IMR-90 (cell line): ENCODE measurements at regions of chr1 and their contacts with region 1.

Region 1: GRCh38 chr1:111755331-111756123 is at the start of gene DDX20:
- DNase-seq: peak; percentile 98
- ATAC-seq: peak; percentile 96
- H3K4me3 ChIP-seq: peak within 1 kb of the TSS; percentile 85
- H3K27ac ChIP-seq: peak within 1 kb of the TSS; percentile 94
- H3K4me1 ChIP-seq: peaks cover 4% of the 10 kb centered on the region
- H3K27me3 ChIP-seq: no peaks in the 10 kb centered on the region
- CTCF ChIP-seq: peak; percentile 97
- POLR2A ChIP-seq: peak; percentile 87; the same call in 1 of the 2 replicates
- RAD21 ChIP-seq: peak; percentile 86
- total RNA-seq, gene DDX20: 10.9 and 14.2 TPM in 2 replicates

Region 2: GRCh38 chr1:111227851-111228747 is 527.4 kb before region 1 on chr1:
- CTCF ChIA-PET with region 1: no interaction called
- POLR2A ChIA-PET with region 1: no interaction called
- dilution Hi-C with region 1: no loop called
- in situ Hi-C with region 1: loop called (anchors 10 kb)
- intact Hi-C with region 1: loop called (anchors 5 kb)
- DNase-seq: peak; percentile 93
- ATAC-seq: peak; percentile 97
- H3K4me3 ChIP-seq: no peak overlapping the region
- H3K27ac ChIP-seq: peak overlapping the region; percentile 66; the same call in 1 of the 2 replicates
- H3K4me1 ChIP-seq: peaks cover 12% of the 10 kb centered on the region
- H3K27me3 ChIP-seq: no peaks in the 10 kb centered on the region
- CTCF ChIP-seq: no peak
- POLR2A ChIP-seq: no peak
- RAD21 ChIP-seq: no peak

Region 3: GRCh38 chr1:111471012-111471411 is 284.5 kb before region 1 on chr1:
- CTCF ChIA-PET with region 1: no interaction called
- POLR2A ChIA-PET with region 1: no interaction called
- dilution Hi-C with region 1: loop called (anchors 25 kb)
- in situ Hi-C with region 1: no loop called
- intact Hi-C with region 1: no loop called
- DNase-seq: no peak
- ATAC-seq: no peak
- H3K4me3 ChIP-seq: no peak overlapping the region
- H3K27ac ChIP-seq: no peak overlapping the region
- H3K4me1 ChIP-seq: no peaks in the 10 kb centered on the region
- H3K27me3 ChIP-seq: no peaks in the 10 kb centered on the region
- CTCF ChIP-seq: no peak
- POLR2A ChIP-seq: no peak
- RAD21 ChIP-seq: no peak

Region 4: GRCh38 chr1:111720274-111720976 is 35.1 kb before region 1 on chr1:
- CTCF ChIA-PET with region 1: interaction called, 17 read pairs
- POLR2A ChIA-PET with region 1: no interaction called
- dilution Hi-C with region 1: no loop called
- in situ Hi-C with region 1: loop called (anchors 5 kb)
- intact Hi-C with region 1: loop called (anchors 1 kb)
- DNase-seq: no peak
- ATAC-seq: no peak
- H3K4me3 ChIP-seq: no peak overlapping the region
- H3K27ac ChIP-seq: no peak overlapping the region
- H3K4me1 ChIP-seq: peaks cover 12% of the 10 kb centered on the region
- H3K27me3 ChIP-seq: no peaks in the 10 kb centered on the region
- CTCF ChIP-seq: no peak
- POLR2A ChIP-seq: no peak
- RAD21 ChIP-seq: no peak